Aorta (tissue), 5 donors: ENCODE measurements at regions of chr6 and their contacts with region 1.

Region 1: GRCh38 chr6:13383328-13384163 is 55.2 kb upstream of the TBC1D7 start:
- DNase-seq: no peak
- ATAC-seq: peak; percentile 62
- H3K4me3 ChIP-seq: no peak overlapping the region
- H3K27ac ChIP-seq: no peak overlapping the region
- H3K4me1 ChIP-seq: no peaks in the 10 kb centered on the region
- H3K27me3 ChIP-seq: no peaks in the 10 kb centered on the region

Region 2: GRCh38 chr6:13538084-13538483 is 154.5 kb after region 1 on chr6:
- intact Hi-C with region 1: loop called in 1 of 2 experiments (anchors 5 kb)
- DNase-seq: no peak
- ATAC-seq: no peak
- H3K4me3 ChIP-seq: no peak overlapping the region
- H3K27ac ChIP-seq: no peak overlapping the region
- H3K4me1 ChIP-seq: no peaks in the 10 kb centered on the region
- H3K27me3 ChIP-seq: no peaks in the 10 kb centered on the region

Region 3: GRCh38 chr6:13927203-13927602 is 543.7 kb after region 1 on chr6:
- intact Hi-C with region 1: no loop called
- DNase-seq: no peak
- ATAC-seq: no peak
- H3K4me3 ChIP-seq: no peak overlapping the region
- H3K27ac ChIP-seq: no peak overlapping the region
- H3K4me1 ChIP-seq: no peaks in the 10 kb centered on the region
- H3K27me3 ChIP-seq: peaks cover 0 to 3% of the 10 kb centered on the region in 2 donors

Region 4: GRCh38 chr6:13941902-13942301 is 558.4 kb after region 1 on chr6:
- intact Hi-C with region 1: no loop called
- DNase-seq: no peak
- ATAC-seq: no peak
- H3K4me3 ChIP-seq: no peak overlapping the region
- H3K27ac ChIP-seq: no peak overlapping the region
- H3K4me1 ChIP-seq: no peaks in the 10 kb centered on the region
- H3K27me3 ChIP-seq: no peaks in the 10 kb centered on the region